Posterior vena cava (tissue), 2 donors: ENCODE measurements at regions of chr13 and their contacts with region 1.

Region 1: GRCh38 chr13:99774659-99775058 is 196.9 kb downstream of the ZIC5 start:
- DNase-seq: no peak

Region 2: DNA sequence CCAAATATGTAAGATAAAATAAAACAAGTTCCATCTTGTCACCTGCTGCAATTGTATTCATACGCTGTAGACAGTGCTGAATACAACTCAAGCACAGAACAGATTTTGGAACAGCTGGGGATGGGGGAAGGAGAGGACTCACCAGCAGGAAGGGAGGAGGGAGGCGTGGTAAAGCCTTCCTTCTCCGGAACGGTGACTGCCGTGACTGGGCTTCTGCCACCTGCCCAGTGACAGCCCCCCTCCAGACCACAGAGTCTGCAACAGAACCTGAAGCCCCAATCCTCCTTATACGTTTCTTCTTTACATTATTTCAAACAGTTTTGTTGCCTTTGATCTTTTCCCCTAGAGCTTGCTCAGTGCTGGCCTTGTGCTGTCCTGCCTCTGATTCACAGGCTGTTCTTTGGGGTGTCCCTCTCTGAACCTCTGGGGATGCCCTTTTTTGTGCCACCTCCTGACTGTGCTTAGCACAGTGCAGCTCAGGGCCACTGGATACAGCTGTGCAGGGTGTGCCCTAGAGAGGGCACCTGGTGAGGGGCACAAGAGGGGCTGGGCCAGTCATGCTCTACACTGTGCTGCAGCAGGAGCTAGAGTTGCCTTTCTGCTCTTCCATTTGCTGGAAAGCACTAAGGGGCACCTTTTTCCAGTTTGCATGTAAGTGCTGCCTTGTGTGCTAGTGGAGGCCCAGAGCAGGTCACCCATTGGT is 16.0 kb before region 1 on chr13:
- intact Hi-C with region 1: loop called in 1 of 2 experiments (anchors 1 kb)
- DNase-seq: no peak